ENCODE measurements at regions of chr12 and their contacts with region 1.

Region 1: GRCh38 chr12:95117178-95117599 is 43.8 kb upstream of the NR2C1 start:
- DNase-seq: peak; percentile 86
- H3K4me3 Mint-ChIP-seq: no peak overlapping the region
- H3K27ac Mint-ChIP-seq: no peak overlapping the region
- H3K4me1 Mint-ChIP-seq: peaks cover 2% of the 10 kb centered on the region
- H3K27me3 Mint-ChIP-seq: no peaks in the 10 kb centered on the region

Region 2: DNA sequence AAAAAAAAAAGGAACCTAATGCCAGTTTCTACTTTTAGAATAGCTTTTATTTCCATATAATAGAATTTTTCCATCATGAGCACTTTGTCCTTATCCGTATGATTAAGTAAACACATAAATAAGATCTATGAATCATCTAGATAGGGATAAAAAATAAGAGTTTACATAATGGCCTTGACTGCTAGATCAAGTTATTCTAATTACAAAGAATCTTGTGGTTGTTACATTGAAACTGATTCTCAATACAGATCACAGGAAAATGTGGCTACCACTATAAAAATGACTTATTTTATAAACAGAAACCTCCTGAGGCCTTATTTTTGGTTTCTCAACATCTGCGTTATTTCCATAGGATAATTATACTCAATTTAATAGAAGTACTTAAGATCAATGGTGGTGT is 79.3 kb before region 1 on chr12:
- intact Hi-C with region 1: no loop called
- DNase-seq: no peak
- H3K4me3 Mint-ChIP-seq: no peak overlapping the region
- H3K27ac Mint-ChIP-seq: no peak overlapping the region
- H3K4me1 Mint-ChIP-seq: peaks cover 18% of the 10 kb centered on the region
- H3K27me3 Mint-ChIP-seq: no peaks in the 10 kb centered on the region

Region 3: GRCh38 chr12:95130096-95130495 is 12.9 kb after region 1 on chr12:
- intact Hi-C with region 1: no loop called
- DNase-seq: no peak
- H3K4me3 Mint-ChIP-seq: no peak overlapping the region
- H3K27ac Mint-ChIP-seq: no peak overlapping the region
- H3K4me1 Mint-ChIP-seq: no peaks in the 10 kb centered on the region
- H3K27me3 Mint-ChIP-seq: no peaks in the 10 kb centered on the region

Region 4: DNA sequence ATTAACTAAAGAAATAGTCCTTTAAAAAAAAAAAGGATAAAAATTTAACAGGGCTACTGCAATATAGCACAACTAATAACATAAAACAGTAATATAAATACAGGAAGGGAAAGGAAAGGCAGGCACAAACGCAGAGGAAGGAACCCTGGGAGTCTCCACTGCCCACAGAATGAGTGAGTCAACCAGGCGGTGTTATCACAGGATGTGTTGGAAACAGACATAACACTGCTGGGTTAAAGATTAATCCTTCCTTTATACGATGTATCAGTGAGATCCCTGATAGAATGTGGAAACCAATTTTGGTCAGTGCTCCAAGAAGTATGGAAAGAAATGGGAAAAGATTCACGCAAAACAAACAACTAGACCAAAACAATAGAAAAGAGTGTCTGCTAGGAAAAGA is 52.2 kb after region 1 on chr12:
- intact Hi-C with region 1: no loop called
- DNase-seq: no peak
- H3K4me3 Mint-ChIP-seq: no peak overlapping the region
- H3K27ac Mint-ChIP-seq: no peak overlapping the region
- H3K4me1 Mint-ChIP-seq: no peaks in the 10 kb centered on the region
- H3K27me3 Mint-ChIP-seq: no peaks in the 10 kb centered on the region

Region 5: GRCh38 chr12:95262808-95263207 is 145.6 kb after region 1 on chr12:
- intact Hi-C with region 1: no loop called
- DNase-seq: no peak
- H3K4me3 Mint-ChIP-seq: no peak overlapping the region
- H3K27ac Mint-ChIP-seq: no peak overlapping the region
- H3K4me1 Mint-ChIP-seq: no peaks in the 10 kb centered on the region
- H3K27me3 Mint-ChIP-seq: no peaks in the 10 kb centered on the region

Region 6: DNA sequence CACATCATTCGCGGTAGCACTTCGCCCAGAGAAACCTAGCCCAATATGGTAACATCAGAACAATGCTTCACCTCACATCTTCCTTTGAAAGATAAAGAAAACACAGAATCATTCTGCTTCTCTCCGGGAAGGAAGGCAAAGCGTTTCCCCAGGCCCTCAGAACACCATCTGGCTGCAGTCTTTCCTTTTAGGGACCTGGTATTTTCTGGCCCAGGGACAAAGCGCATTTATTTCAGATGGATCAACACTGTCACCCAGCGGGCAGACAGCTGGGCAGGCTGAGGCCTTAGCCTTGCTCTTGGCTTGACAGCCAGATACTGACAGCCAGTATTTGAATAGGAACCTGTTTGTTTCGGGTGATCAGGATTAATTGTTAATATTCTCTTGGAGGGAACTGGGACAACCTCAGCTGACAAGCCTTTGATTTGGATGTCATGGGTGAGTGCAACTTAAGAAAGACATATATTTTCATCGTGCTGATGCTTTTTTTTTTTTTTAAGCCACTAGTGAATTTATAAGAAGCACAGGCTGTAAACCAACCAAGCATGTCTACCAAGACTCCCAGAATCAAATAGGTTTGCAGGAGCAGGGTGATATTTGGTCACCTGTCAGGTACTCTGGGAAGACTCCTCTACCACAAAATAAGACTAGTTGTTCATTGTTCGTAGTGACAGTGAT is 219.3 kb after region 1 on chr12:
- intact Hi-C with region 1: loop called (anchors 1 kb)
- DNase-seq: no peak
- H3K4me3 Mint-ChIP-seq: no peak overlapping the region
- H3K27ac Mint-ChIP-seq: no peak overlapping the region
- H3K4me1 Mint-ChIP-seq: peaks cover 3% of the 10 kb centered on the region
- H3K27me3 Mint-ChIP-seq: no peaks in the 10 kb centered on the region

Region 7: GRCh38 chr12:95473884-95474659 is 356.9 kb after region 1 on chr12 and contains the start of gene METAP2:
- intact Hi-C with region 1: loop called (anchors 1 kb)
- DNase-seq: peak; percentile 97
- H3K4me3 Mint-ChIP-seq: peak within 1 kb of the TSS; percentile 94
- H3K27ac Mint-ChIP-seq: peak within 1 kb of the TSS; percentile 100
- H3K4me1 Mint-ChIP-seq: peaks cover 32% of the 10 kb centered on the region
- H3K27me3 Mint-ChIP-seq: no peaks in the 10 kb centered on the region
- total RNA-seq, gene METAP2: 125 and 133 TPM in 2 replicates

Region 8: GRCh38 chr12:95532851-95533250 is 415.7 kb after region 1 on chr12:
- intact Hi-C with region 1: loop called (anchors 1 kb)
- DNase-seq: no peak
- H3K4me3 Mint-ChIP-seq: no peak overlapping the region
- H3K27ac Mint-ChIP-seq: no peak overlapping the region
- H3K4me1 Mint-ChIP-seq: peaks cover 10% of the 10 kb centered on the region
- H3K27me3 Mint-ChIP-seq: no peaks in the 10 kb centered on the region